T47D (cell line): ENCODE measurements at regions of chr5 and their contacts with region 1.

Region 1: DNA sequence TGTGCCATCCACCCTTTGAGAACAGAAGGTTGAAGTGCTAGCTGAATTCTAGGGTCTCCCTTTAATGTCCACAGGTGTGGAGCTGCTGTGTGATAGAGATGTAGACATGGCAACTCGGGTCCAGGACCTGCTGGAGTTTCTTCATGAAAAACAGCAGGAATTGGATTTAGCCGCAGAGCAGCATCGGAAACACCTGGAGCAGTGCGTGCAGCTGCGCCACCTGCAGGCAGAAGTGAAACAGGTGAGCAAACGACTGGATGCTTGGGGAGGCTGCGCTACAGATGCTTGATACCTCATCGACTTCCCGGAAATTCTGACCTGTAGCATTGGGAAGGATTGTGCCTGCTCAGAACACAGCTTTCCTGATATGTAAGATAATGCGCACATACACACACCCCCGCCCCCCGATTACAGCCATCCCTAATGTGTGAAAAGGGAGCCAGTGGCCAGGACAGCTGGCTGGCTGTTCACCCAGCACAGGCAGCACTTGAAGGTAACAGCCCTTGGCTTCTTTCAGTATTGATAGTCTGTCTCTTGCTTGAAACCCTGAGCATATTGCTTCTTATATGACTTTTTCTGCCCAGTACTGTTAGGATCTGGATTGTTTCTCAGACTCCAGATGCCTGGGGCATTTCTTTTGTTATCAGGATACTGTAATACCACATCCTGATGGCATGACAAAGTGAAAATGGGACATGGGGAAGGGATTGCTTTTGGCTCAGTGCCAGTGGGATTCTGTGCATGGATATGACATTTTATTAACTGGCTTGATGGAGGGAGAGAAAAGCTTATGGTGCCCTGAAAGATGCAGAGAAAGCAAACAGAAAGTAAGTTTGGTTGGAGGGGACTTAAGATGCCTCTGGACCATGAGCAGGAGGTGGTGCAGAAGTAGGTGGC is 216.8 kb upstream of the OTULINL start:
- DNase-seq: peak; percentile 44 to 73

Region 2: GRCh38 chr5:13994621-13995253 is 370.1 kb before region 1 on chr5:
- in situ Hi-C with region 1: loop called (anchors 10 kb)
- DNase-seq: no peak

Region 3: DNA sequence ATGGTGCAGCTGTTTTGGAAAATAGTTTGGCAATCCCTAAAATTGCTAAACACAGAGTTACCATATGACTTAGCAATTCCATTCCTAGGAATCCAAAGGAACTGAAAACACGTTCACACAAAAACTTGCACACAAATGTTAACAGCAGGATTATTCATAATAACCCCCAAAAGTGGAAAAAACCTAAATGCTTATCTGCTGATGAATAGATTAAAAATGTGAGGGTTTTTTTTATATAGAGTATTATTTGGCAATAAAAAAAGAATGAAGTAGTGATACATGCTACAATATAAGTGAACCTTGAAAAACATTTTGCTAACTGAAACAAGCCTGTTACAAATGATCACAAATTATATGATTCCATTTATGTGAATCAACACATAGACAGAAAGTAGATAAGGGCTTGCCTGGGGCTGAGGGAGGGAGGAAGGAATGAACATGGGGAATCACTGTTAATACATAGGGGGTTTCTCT is 266.8 kb before region 1 on chr5:
- in situ Hi-C with region 1: no loop called
- DNase-seq: no peak

Region 4: GRCh38 chr5:14167211-14167845 is 197.5 kb before region 1 on chr5:
- in situ Hi-C with region 1: no loop called
- DNase-seq: no peak

Region 5: GRCh38 chr5:14281746-14282181 is 83.1 kb before region 1 on chr5:
- in situ Hi-C with region 1: no loop called
- DNase-seq: no peak

Region 6: GRCh38 chr5:14483525-14484157 is 118.8 kb after region 1 on chr5:
- in situ Hi-C with region 1: no loop called
- DNase-seq: no peak